ENCODE measurements at regions of chr20 and their contacts with region 1.

Region 1: DNA sequence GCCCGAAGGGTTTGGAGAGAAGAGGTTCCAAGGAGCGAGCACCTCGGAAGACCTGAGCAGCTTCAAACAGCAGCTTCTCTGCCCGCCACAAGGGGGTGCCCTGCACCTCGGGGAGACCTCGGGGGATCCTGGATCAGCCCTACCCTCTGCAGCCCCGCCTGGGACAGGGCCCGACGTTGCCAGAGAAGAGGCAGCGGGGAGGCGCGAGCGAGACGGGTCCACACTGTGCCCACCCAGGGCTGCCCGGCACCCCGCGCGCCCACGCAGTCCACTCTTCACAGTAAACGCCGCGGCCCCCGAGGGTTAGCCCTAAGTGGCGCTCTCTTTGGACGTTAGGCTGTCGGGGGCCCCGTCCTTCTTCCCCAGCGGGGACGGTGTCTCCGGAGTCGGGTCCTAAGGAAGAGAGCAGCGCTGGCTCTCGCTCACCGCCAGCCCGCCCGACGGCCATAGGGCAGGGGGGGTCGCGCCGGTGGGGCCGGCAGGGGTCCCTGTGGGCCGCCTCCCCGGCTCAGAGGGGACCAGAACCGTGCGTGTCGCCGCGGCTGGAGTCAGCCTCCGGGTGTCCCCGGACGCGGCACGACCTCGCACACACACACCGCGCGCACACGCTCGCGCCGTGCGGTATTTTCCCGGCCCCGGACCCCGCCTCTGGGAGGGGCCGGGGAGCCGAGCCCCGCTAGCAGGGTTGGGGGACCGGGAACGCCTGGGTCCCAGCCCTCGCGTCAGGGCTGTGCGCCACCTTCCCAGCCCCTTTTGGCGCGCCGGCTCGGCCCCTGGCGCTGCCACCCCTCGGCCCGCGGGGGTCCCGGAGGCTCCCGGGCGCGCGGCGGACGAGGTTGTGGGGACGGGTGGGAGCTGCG is 929 bp downstream of the CDH22 start:
- DNase-seq: peak; percentile 72
- H3K4me3 Mint-ChIP-seq: no peak overlapping the region
- H3K27ac Mint-ChIP-seq: no peak overlapping the region
- H3K4me1 Mint-ChIP-seq: peaks cover 7% of the 10 kb centered on the region
- H3K27me3 Mint-ChIP-seq: peaks cover 72% of the 10 kb centered on the region

Region 2: DNA sequence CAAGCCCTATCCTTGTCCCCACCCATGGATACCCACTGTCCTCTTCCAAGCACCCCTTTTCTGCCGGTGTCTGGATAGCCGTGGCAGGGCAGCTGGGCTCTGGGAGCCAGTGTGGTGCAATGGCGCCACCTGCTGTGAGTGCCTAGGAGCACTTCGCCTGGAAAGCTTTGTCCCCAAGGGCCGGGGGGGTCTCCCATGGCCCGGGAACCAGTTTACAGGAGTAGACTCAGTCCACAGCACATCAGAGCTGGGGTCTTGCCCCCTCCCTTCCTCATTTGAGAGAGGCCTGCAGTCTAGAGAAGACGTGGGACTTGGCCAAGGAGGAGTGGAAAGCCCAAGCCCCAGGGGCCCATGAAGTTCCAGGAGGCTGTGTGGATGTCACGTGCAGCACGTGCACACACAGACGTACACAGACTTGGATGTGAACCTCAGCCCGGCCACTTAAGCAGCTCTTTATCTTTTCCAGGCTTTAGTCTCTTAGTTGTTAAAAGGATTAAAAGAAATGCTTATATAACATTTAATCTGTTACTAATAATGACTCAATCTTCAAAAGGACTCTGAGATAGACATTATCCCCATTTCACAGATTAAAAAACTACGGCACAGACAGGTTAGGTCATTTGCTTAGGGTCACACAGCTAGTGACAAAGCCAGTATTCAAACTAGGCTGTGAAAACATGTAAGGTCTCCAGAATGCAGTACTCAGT is 41.8 kb after region 1 on chr20:
- CTCF ChIA-PET with region 1: interaction called, 36 read pairs
- POLR2A ChIA-PET with region 1: no interaction called
- DNase-seq: peak; percentile 62
- H3K4me3 Mint-ChIP-seq: no peak overlapping the region
- H3K27ac Mint-ChIP-seq: no peak overlapping the region
- H3K4me1 Mint-ChIP-seq: peaks cover 24% of the 10 kb centered on the region
- H3K27me3 Mint-ChIP-seq: peaks cover 7% of the 10 kb centered on the region

Region 3: GRCh38 chr20:46406199-46406985 is 99.0 kb after region 1 on chr20 and contains the start of gene ELMO2:
- CTCF ChIA-PET with region 1: interaction called, 24 read pairs
- POLR2A ChIA-PET with region 1: no interaction called
- DNase-seq: peak; percentile 97
- H3K4me3 Mint-ChIP-seq: peak within 1 kb of the TSS; percentile 91
- H3K27ac Mint-ChIP-seq: peak within 1 kb of the TSS; percentile 93
- H3K4me1 Mint-ChIP-seq: peaks cover 69% of the 10 kb centered on the region
- H3K27me3 Mint-ChIP-seq: no peaks in the 10 kb centered on the region
- total RNA-seq, gene ELMO2: 85.6 to 97.6 TPM

Region 4: GRCh38 chr20:46438156-46438750 is 130.9 kb after region 1 on chr20:
- CTCF ChIA-PET with region 1: interaction called, 10 read pairs
- POLR2A ChIA-PET with region 1: no interaction called
- DNase-seq: no peak
- H3K4me3 Mint-ChIP-seq: no peak overlapping the region
- H3K27ac Mint-ChIP-seq: no peak overlapping the region
- H3K4me1 Mint-ChIP-seq: no peaks in the 10 kb centered on the region
- H3K27me3 Mint-ChIP-seq: peaks cover 17% of the 10 kb centered on the region